Activated CD4-positive, alpha-beta T cell treated with anti-CD3 and anti-CD28 coated beads, Interleukin-2, amount 10 ng/mL, durations not matched to agents 7 days and 5 days (primary cell): ENCODE measurements at regions of chr1 and their contacts with region 1.

Region 1: GRCh38 chr1:171984850-171985485 is 143.7 kb downstream of the DNM3 start:
- DNase-seq: peak; percentile 38
- H3K4me3 Mint-ChIP-seq: no peak overlapping the region
- H3K27ac Mint-ChIP-seq: no peak overlapping the region
- H3K4me1 Mint-ChIP-seq: no peaks in the 10 kb centered on the region
- H3K27me3 Mint-ChIP-seq: peaks cover 6% of the 10 kb centered on the region

Region 2: GRCh38 chr1:171801487-171801891 is 183.5 kb before region 1 on chr1:
- CTCF ChIA-PET with region 1: interaction called, 12 read pairs
- POLR2A ChIA-PET with region 1: no interaction called
- DNase-seq: no peak
- H3K4me3 Mint-ChIP-seq: no peak overlapping the region
- H3K27ac Mint-ChIP-seq: no peak overlapping the region
- H3K4me1 Mint-ChIP-seq: peaks cover 10% of the 10 kb centered on the region
- H3K27me3 Mint-ChIP-seq: no peaks in the 10 kb centered on the region

Region 3: GRCh38 chr1:172041742-172042141 is 56.8 kb after region 1 on chr1:
- CTCF ChIA-PET with region 1: no interaction called
- POLR2A ChIA-PET with region 1: no interaction called
- DNase-seq: no peak
- H3K4me3 Mint-ChIP-seq: no peak overlapping the region
- H3K27ac Mint-ChIP-seq: no peak overlapping the region
- H3K4me1 Mint-ChIP-seq: peaks cover 9% of the 10 kb centered on the region
- H3K27me3 Mint-ChIP-seq: no peaks in the 10 kb centered on the region